WTC11 (cell line): ENCODE measurements at regions of chr3 and their contacts with region 1.

Region 1: DNA sequence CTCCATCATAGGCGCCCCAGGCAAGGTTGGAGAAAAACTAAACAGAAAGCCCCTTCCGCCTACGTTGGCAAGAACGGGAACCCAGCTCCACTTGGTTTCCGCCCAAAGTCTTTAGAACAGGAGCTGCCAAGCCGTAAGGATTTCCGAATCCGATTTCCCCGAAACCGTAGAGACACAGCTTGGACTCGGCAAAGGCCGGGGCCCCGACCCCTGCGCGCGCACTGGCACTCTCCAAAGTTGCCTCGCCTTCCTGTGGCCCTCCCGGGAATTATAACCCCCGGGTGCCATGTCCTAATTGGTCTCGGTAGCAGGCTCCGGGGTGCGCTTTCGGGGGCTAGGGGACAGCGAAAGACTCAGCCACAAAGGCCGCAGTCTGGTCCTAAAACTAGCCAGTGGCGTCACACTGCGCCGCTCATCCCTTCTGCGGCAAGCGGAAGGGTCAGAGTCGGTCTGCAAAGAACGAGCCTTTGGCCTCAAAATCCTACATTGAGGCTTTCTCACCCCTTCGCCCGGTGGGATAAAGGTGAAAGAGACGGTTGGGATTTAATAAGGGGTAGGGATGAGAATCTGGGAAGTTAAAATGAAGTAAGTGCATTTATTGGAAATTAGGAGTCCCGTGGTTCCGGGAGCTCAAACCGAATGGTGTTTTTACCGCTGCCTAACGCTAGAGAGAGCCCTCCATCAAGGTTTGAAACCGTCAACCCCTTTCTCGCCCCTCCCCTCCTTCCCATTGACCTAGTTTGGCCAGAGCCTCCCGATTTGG is 6.8 kb downstream of the BCL6 start:
- DNase-seq: peak; percentile 86
- ATAC-seq: peak; percentile 59
- H3K4me3 Mint-ChIP-seq: peak overlapping the region; percentile 82
- H3K27ac Mint-ChIP-seq: peak overlapping the region; percentile 93
- H3K4me1 Mint-ChIP-seq: peaks cover 48% of the 10 kb centered on the region
- H3K27me3 Mint-ChIP-seq: peaks cover 32% of the 10 kb centered on the region
- CTCF ChIP-seq: 0 out of 2 replicates have a peak, but pooled peaks have one; percentile 16

Region 2: DNA sequence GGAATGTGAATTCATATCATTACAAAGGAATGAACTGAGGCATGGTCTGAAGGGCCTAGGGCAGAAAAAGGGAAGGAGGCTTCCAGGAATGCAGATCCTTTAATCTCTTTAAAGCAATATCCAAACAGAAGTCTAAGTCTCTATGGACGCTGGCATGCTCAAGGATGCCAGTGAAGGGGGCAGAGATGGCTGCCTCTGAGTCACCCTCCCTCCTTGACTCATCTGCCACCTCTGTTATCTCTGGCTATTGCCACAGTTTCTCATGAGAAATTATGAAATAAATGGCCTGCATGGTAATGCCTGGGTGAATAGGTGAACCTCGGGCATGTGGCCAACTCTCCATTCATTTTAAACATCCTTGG is 103.1 kb after region 1 on chr3:
- CTCF ChIA-PET with region 1: no interaction called
- POLR2A ChIA-PET with region 1: no interaction called
- DNase-seq: no peak
- ATAC-seq: no peak
- H3K4me3 Mint-ChIP-seq: no peak overlapping the region
- H3K27ac Mint-ChIP-seq: no peak overlapping the region
- H3K4me1 Mint-ChIP-seq: 0 out of 2 replicates have a peak, but pooled peaks cover 3% of the 10 kb centered on the region
- H3K27me3 Mint-ChIP-seq: no peaks in the 10 kb centered on the region
- CTCF ChIP-seq: no peak

Region 3: GRCh38 chr3:188041193-188041592 is 302.7 kb after region 1 on chr3:
- CTCF ChIA-PET with region 1: interaction called, 11 read pairs
- POLR2A ChIA-PET with region 1: no interaction called
- DNase-seq: no peak
- ATAC-seq: no peak
- H3K4me3 Mint-ChIP-seq: no peak overlapping the region
- H3K27ac Mint-ChIP-seq: no peak overlapping the region
- H3K4me1 Mint-ChIP-seq: peaks cover 26% of the 10 kb centered on the region
- H3K27me3 Mint-ChIP-seq: no peaks in the 10 kb centered on the region
- CTCF ChIP-seq: no peak

Region 4: GRCh38 chr3:188205992-188206416 is 467.5 kb after region 1 on chr3:
- CTCF ChIA-PET with region 1: interaction called, 29 read pairs
- POLR2A ChIA-PET with region 1: no interaction called
- DNase-seq: peak; percentile 48
- ATAC-seq: peak; percentile 64
- H3K4me3 Mint-ChIP-seq: no peak overlapping the region
- H3K27ac Mint-ChIP-seq: no peak overlapping the region
- H3K4me1 Mint-ChIP-seq: peaks cover 30% of the 10 kb centered on the region
- H3K27me3 Mint-ChIP-seq: no peaks in the 10 kb centered on the region
- CTCF ChIP-seq: peak; percentile 53; the same call in 1 of the 2 replicates

Region 5: DNA sequence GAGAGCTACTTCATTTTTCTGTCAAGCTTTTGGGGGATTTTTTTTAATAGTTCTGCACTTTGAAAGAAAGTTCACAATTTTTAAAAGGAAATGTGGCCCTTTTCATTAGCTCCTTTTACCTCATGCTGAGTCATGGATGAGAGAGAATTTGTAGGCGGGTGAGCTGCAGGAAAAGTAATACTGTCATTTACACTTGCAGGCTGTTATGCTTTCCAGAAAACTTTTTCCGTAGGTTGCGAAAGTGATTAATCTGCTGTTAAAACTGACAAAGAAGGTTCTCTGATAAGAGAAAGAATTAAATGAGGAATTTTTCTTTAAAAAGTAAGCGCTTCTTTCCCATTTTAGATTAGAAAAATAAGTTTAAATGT is 845.6 kb after region 1 on chr3:
- CTCF ChIA-PET with region 1: interaction called, 13 read pairs
- POLR2A ChIA-PET with region 1: no interaction called
- DNase-seq: no peak
- ATAC-seq: no peak
- H3K4me3 Mint-ChIP-seq: no peak overlapping the region
- H3K27ac Mint-ChIP-seq: no peak overlapping the region
- H3K4me1 Mint-ChIP-seq: no peaks in the 10 kb centered on the region; the same call in 1 of the 2 replicates
- H3K27me3 Mint-ChIP-seq: no peaks in the 10 kb centered on the region
- CTCF ChIP-seq: no peak

Region 6: DNA sequence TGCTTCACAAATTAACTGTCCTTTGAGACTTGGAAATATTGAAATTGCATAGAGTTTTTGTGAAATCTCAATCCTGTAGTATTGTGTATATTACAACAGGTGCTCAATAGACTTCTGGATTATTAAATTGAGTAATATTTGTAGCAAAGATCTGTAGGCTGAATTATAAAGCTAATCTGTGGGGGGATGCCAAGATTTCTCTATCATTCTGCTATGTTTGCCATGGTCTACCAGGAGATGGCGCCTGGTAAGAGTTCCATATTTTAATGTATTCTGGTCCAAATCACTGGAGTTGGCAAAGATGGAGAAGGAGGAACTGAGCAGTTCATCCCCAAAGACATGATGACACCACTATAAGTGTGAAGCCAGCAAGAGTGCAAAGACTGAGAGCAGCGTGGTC is 1092.4 kb after region 1 on chr3:
- CTCF ChIA-PET with region 1: interaction called, 11 read pairs
- POLR2A ChIA-PET with region 1: interaction called, 3 read pairs
- DNase-seq: no peak
- ATAC-seq: peak; percentile 40
- H3K4me3 Mint-ChIP-seq: no peak overlapping the region
- H3K27ac Mint-ChIP-seq: no peak overlapping the region
- H3K4me1 Mint-ChIP-seq: no peaks in the 10 kb centered on the region
- H3K27me3 Mint-ChIP-seq: no peaks in the 10 kb centered on the region
- CTCF ChIP-seq: no peak